ENCODE measurements at regions of chr6 and their contacts with region 1.

Region 1: GRCh38 chr6:6890400-6890858 is 217.3 kb upstream of the RREB1 start:
- DNase-seq: peak; percentile 47 to 85 (median 64)
- ATAC-seq: peak; percentile 89
- H3K4me3 ChIP-seq: peak overlapping the region; percentile 14
- H3K27ac ChIP-seq: peak overlapping the region; percentile 51
- H3K4me1 ChIP-seq: peaks cover 36 to 37% of the 10 kb centered on the region in 2 experiments
- H3K27me3 ChIP-seq: no peaks in the 10 kb centered on the region
- CTCF ChIP-seq: no peak
- EP300 ChIP-seq: no peak
- POLR2A ChIP-seq: peak; percentile 49
- RAD21 ChIP-seq: no peak

Region 2: DNA sequence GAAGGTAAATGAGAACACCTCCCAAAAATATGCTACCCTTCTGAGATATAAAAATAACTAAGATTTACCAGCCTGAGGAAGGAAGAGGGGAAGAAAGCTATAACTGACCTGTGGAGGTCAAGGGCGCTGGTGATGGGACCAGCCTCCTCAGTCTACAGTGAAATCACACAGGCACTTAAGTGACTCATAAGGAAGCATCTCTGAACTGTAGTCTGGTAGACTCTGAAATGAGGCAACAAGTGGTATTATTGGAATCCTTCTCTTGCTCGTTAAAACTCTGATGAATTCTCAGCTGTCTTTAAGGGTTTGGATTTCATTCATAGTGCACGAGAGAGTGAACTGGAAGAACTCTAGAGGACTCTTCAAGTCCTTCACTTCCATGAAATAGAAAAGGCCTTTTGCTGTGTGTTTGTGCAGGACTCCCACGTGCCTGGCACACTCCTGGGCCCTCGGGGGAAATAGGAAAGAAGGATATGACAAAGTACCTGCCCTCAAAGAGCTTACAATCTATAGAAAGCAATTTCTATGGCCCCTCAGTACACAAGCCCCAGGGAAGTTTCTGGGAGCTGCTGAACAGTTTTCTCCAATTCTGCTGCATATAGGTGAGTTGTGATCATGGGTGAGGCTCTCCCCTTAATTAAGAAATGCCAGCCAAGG is 14.5 kb before region 1 on chr6:
- CTCF ChIA-PET with region 1: no interaction called
- POLR2A ChIA-PET with region 1: interaction called, 9 read pairs
- in situ Hi-C with region 1: no loop called
- intact Hi-C with region 1: loop called (anchors 2 kb)
- DNase-seq: no peak
- ATAC-seq: no peak
- H3K4me3 ChIP-seq: no peak overlapping the region
- H3K27ac ChIP-seq: no peak overlapping the region
- H3K4me1 ChIP-seq: peaks cover 10 to 38% of the 10 kb centered on the region in 2 experiments; a peak in 4 of 5 replicates
- H3K27me3 ChIP-seq: no peaks in the 10 kb centered on the region
- CTCF ChIP-seq: no peak
- EP300 ChIP-seq: no peak
- POLR2A ChIP-seq: no peak
- RAD21 ChIP-seq: no peak

Measured in K562 (cell line).